ENCODE measurements at regions of chr1 and their contacts with region 1.

Region 1: GRCh38 chr1:21200767-21201166 is 24.1 kb upstream of the EIF4G3 start:
- DNase-seq: no peak
- ATAC-seq: no peak
- H3K4me3 ChIP-seq: no peak overlapping the region
- H3K4me3 Mint-ChIP-seq: no peak overlapping the region
- H3K27ac ChIP-seq: no peak overlapping the region
- H3K27ac Mint-ChIP-seq: no peak overlapping the region
- H3K4me1 ChIP-seq: no peaks in the 10 kb centered on the region
- H3K4me1 Mint-ChIP-seq: no peaks in the 10 kb centered on the region
- H3K27me3 ChIP-seq: no peaks in the 10 kb centered on the region
- H3K27me3 Mint-ChIP-seq: peaks cover 4 to 9% (median 5%) of the 10 kb centered on the region in 5 donors

Region 2: DNA sequence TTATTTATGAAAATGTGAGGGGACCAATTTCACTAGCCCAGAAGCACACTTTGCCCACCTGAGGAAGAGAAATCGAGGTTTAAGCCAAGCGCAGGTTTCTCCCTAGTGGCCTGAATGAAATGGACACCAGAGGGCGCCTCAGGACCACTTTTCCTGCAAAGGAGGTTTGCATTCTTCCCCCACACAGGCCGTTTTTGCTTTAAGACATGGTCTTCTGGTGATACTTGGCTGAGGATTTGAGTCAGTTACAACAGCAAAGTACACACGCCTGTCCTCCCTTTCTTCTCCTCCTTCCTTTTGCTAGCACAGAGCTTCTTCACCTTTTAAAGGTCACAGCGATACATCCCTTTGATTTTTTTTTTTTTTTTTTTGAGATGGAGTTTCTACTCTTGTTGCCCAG is 1282.7 kb before region 1 on chr1:
- CTCF ChIA-PET with region 1: no interaction called
- POLR2A ChIA-PET with region 1: no interaction called
- intact Hi-C with region 1: loop called in 1 of 2 experiments (anchors 5 kb)
- DNase-seq: peak; percentile 49 to 81 (median 73)
- ATAC-seq: peak; percentile 75
- H3K4me3 ChIP-seq: no peak overlapping the region
- H3K4me3 Mint-ChIP-seq: peak overlapping the region in 1 of 10 donors; percentile 42
- H3K27ac ChIP-seq: no peak overlapping the region
- H3K27ac Mint-ChIP-seq: no peak overlapping the region
- H3K4me1 ChIP-seq: no peaks in the 10 kb centered on the region
- H3K4me1 Mint-ChIP-seq: peaks cover 0 to 5% (median 0%) of the 10 kb centered on the region in 7 donors
- H3K27me3 ChIP-seq: no peaks in the 10 kb centered on the region
- H3K27me3 Mint-ChIP-seq: peaks cover 0 to 6% (median 0%) of the 10 kb centered on the region in 5 donors

Region 3: DNA sequence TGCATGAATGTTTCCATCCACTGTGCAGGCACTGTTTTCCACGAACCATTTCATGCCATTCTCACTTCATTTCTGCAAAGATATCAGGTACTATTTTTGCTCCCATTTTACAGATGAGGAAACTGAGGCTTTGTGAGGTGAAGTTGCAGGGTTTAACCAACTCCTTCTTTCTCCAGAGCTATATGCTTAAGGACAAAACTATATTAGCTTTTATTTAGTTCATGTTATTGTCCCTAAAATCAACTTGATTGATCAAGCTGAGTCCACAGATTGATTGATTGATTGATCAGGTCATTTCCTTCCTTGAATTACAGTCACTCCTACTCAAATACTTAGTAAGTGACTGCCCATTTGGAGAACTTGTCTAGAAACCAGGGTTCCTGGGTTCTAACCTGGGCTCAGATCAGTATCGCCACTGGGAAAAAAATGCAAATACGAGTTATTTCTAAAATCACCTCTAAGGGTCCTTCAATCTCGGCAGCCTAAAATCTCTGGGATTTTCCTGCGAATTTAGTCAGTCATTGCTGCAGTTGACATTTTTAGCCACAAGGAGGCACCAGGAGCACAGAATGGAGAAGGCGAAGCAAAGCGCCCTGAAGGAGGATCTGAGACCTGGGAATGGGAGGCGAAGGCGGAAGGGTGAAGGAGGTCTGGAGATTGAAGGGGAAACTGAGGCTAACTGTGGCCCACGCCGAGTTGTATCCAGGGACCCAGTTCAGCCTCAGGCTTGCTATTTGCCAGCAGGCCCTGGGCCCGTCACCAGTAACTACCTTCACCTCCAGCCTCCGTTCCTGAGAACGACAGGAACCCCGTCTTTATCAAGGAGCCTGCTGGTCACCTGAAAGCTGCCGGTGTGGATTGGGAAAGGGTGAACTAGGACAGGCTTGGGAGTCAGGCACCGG is 678.6 kb before region 1 on chr1:
- CTCF ChIA-PET with region 1: no interaction called
- POLR2A ChIA-PET with region 1: no interaction called
- intact Hi-C with region 1: loop called in 1 of 2 experiments (anchors 5 kb)
- DNase-seq: peak; percentile 28 to 64 (median 55)
- ATAC-seq: peak; percentile 67
- H3K4me3 ChIP-seq: no peak overlapping the region
- H3K4me3 Mint-ChIP-seq: no peak overlapping the region
- H3K27ac ChIP-seq: no peak overlapping the region
- H3K27ac Mint-ChIP-seq: peak overlapping the region in 1 of 9 donors; percentile 44
- H3K4me1 ChIP-seq: no peaks in the 10 kb centered on the region
- H3K4me1 Mint-ChIP-seq: peaks cover 0 to 4% (median 0%) of the 10 kb centered on the region in 7 donors
- H3K27me3 ChIP-seq: peaks cover 0 to 3% of the 10 kb centered on the region in 2 donors
- H3K27me3 Mint-ChIP-seq: peaks cover 7 to 25% (median 22%) of the 10 kb centered on the region in 5 donors

Region 4: GRCh38 chr1:20696397-20697329 is 504.1 kb before region 1 on chr1:
- CTCF ChIA-PET with region 1: interaction called, 64 read pairs
- POLR2A ChIA-PET with region 1: interaction called, 3 read pairs
- intact Hi-C with region 1: loop called in 1 of 2 experiments (anchors 1 kb)
- DNase-seq: peak; percentile 38 to 73 (median 65)
- ATAC-seq: peak; percentile 96
- H3K4me3 ChIP-seq: peak overlapping the region; percentile 89
- H3K4me3 Mint-ChIP-seq: peak overlapping the region; percentile 81 to 91 (median 89)
- H3K27ac ChIP-seq: peak overlapping the region; percentile 40
- H3K27ac Mint-ChIP-seq: peak overlapping the region in 4 of 9 donors; percentile 38 to 77 (median 70)
- H3K4me1 ChIP-seq: peaks cover 0 to 5% of the 10 kb centered on the region in 2 donors
- H3K4me1 Mint-ChIP-seq: peaks cover 3 to 8% (median 4%) of the 10 kb centered on the region in 7 donors
- H3K27me3 ChIP-seq: no peaks in the 10 kb centered on the region
- H3K27me3 Mint-ChIP-seq: peaks cover 0 to 7% (median 0%) of the 10 kb centered on the region in 5 donors

Region 5: DNA sequence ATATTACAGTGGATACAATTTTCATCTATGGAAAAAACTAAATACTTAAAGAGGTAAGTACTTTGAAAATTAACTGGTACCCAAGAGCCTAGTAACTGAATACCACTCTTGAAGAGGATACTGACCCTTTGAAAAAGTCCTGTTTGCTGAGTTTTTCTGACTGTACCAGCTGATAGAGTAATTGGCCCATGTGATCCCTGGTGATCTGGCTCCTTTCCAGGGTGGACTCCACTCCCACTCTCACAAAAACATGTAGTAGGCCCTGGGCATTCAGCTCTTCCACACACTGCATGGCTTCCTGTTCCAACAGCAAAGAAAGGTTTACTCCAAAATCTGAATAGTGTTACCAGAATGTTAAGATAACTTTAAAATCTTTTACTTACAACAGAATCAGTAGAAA is 360.0 kb before region 1 on chr1:
- CTCF ChIA-PET with region 1: no interaction called
- POLR2A ChIA-PET with region 1: no interaction called
- intact Hi-C with region 1: no loop called
- DNase-seq: no peak
- ATAC-seq: no peak
- H3K4me3 ChIP-seq: no peak overlapping the region
- H3K4me3 Mint-ChIP-seq: no peak overlapping the region
- H3K27ac ChIP-seq: no peak overlapping the region
- H3K27ac Mint-ChIP-seq: no peak overlapping the region
- H3K4me1 ChIP-seq: no peaks in the 10 kb centered on the region
- H3K4me1 Mint-ChIP-seq: peaks cover 0 to 2% (median 0%) of the 10 kb centered on the region in 7 donors
- H3K27me3 ChIP-seq: no peaks in the 10 kb centered on the region
- H3K27me3 Mint-ChIP-seq: no peaks in the 10 kb centered on the region

Region 6: GRCh38 chr1:20981915-20982314 is 218.9 kb before region 1 on chr1:
- CTCF ChIA-PET with region 1: interaction called, 5 read pairs
- POLR2A ChIA-PET with region 1: no interaction called
- intact Hi-C with region 1: loop called (anchors 1 kb)
- DNase-seq: no peak
- ATAC-seq: no peak
- H3K4me3 ChIP-seq: no peak overlapping the region
- H3K4me3 Mint-ChIP-seq: no peak overlapping the region
- H3K27ac ChIP-seq: no peak overlapping the region
- H3K27ac Mint-ChIP-seq: peak overlapping the region in 1 of 9 donors; percentile 29
- H3K4me1 ChIP-seq: no peaks in the 10 kb centered on the region
- H3K4me1 Mint-ChIP-seq: peaks cover 0 to 4% (median 0%) of the 10 kb centered on the region in 7 donors
- H3K27me3 ChIP-seq: no peaks in the 10 kb centered on the region
- H3K27me3 Mint-ChIP-seq: no peaks in the 10 kb centered on the region

Measured in naive thymus-derived CD4-positive, alpha-beta T cell (primary cell).